Psoas muscle (tissue), 8 donors: ENCODE measurements at regions of chr9 and their contacts with region 1.

Region 1: GRCh38 chr9:133184962-133185361 is 21.2 kb upstream of the GBGT1 start:
- DNase-seq: no peak
- ATAC-seq: peak; percentile 53 to 80 (median 62)
- H3K4me3 ChIP-seq: no peak overlapping the region
- H3K27ac ChIP-seq: no peak overlapping the region
- H3K4me1 ChIP-seq: no peaks in the 10 kb centered on the region
- H3K27me3 ChIP-seq: peaks cover 0 to 43% (median 6%) of the 10 kb centered on the region in 3 donors
- CTCF ChIP-seq: peak; percentile 54

Region 2: GRCh38 chr9:132973713-132974112 is 211.2 kb before region 1 on chr9:
- intact Hi-C with region 1: no loop called
- DNase-seq: no peak
- ATAC-seq: peak in 1 of 4 donors; percentile 40
- H3K4me3 ChIP-seq: no peak overlapping the region
- H3K27ac ChIP-seq: no peak overlapping the region
- H3K4me1 ChIP-seq: no peaks in the 10 kb centered on the region
- H3K27me3 ChIP-seq: peaks cover 0 to 39% (median 0%) of the 10 kb centered on the region in 3 donors
- CTCF ChIP-seq: no peak

Region 3: GRCh38 chr9:133275105-133276000 is 90.4 kb after region 1 on chr9 and contains the start of gene ABO:
- intact Hi-C with region 1: loop called in 1 of 2 experiments (anchors 5 kb)
- DNase-seq: no peak
- ATAC-seq: peak in 2 of 4 donors; percentile 42 to 45
- H3K4me3 ChIP-seq: peak within 1 kb of the TSS; percentile 60
- H3K27ac ChIP-seq: peak within 1 kb of the TSS; percentile 43
- H3K4me1 ChIP-seq: no peaks in the 10 kb centered on the region
- H3K27me3 ChIP-seq: peaks cover 5 to 62% (median 11%) of the 10 kb centered on the region in 3 donors
- CTCF ChIP-seq: peak; percentile 10
- total RNA-seq, gene ABO: 0.37 to 0.86 (median 0.72) TPM

Region 4: DNA sequence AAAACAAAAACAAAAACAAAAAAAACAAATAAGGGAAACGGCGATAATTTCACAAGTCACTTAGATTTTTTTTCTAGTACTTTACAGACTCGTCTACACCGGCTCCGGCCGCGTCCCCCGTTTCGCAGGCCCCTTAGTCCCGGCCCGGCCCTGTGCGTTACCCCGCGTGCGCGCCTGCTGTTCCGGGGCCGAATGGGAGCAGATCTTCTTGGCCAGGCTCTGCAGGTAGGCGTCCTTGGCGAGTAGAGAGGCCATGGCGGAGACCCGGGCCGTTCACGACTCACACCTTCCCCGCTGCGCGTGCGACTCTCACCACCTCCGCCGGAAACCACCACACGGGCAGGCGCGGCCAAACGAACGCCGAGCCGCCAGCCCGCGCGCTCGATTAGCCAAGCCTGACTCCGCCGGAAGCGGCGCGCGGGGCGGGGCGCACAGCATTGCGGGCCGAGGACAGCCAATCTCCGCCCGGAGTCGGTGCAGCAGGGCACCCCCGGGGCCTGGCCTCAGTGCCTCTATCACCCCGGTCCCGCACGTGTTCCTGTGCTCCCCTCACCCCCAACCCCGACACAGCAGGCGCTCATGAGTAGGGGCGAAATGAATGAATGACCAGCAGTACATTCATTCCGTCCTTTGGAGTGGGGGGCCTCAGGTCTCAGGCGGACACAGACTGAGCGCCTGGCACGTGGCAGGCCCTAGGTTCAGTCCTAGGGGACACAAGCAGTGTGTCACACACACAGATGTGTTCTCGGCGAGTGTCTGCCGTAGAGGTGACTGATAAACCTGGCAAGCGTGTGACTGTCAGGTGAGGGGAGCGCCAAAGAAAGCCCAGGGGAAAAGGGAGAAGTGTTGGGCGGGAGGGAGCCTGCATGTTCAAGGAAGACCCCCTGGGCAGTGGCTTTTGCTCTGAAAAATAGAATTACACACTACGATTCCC is 151.2 kb after region 1 on chr9 and contains the start of gene SURF6:
- intact Hi-C with region 1: loop called (anchors 5 kb)
- DNase-seq: peak; percentile 95 to 96
- ATAC-seq: peak; percentile 96 to 97 (median 97)
- H3K4me3 ChIP-seq: peak within 1 kb of the TSS; percentile 87
- H3K27ac ChIP-seq: peak within 1 kb of the TSS; percentile 88
- H3K4me1 ChIP-seq: peaks cover 24% of the 10 kb centered on the region
- H3K27me3 ChIP-seq: no peaks in the 10 kb centered on the region
- CTCF ChIP-seq: no peak
- total RNA-seq, gene SURF6: 11.4 to 27.3 (median 16.0) TPM

Region 5: DNA sequence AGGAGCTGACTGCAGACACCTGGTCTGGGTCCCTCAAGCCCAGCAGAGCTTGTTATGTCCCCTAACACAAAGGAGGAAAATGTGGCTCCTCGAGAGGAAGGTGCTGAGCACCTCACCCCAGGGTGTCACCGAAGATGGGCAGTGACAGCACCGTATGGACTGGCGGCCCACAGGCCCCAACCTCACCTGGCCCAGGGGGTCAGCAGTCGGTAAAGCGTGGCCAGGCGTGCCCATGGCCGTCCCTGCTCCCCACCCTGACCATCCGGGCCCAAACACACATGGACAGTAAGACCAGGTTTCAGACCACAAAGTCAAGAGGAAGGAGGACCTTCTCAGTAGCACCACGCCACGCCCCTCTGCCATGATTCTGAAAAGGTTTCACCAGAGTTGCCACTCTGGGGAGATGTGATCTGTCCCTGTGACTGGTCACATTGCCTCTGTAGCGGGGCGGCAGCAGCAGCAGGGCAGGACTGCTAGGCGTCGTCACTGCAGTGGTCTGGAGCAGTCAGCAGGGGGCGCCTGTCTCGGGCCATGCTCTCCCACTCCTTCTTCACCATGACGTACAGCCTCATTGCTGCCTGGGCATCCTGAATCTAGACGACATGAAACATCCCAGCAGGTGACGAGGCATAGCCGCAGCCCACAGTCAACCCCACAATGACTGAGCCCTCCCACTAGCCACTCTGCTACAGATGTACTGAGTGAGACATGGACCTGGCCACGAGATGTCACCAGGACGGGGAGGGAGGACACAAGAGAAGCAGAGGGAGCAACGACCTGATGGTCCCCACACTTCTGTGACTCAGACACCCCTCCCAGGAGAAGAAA is 221.7 kb after region 1 on chr9:
- intact Hi-C with region 1: loop called in 1 of 2 experiments (anchors 5 kb)
- DNase-seq: peak; percentile 74 to 85
- ATAC-seq: peak; percentile 78 to 85 (median 82)
- H3K4me3 ChIP-seq: no peak overlapping the region
- H3K27ac ChIP-seq: peak overlapping the region; percentile 76
- H3K4me1 ChIP-seq: peaks cover 18% of the 10 kb centered on the region
- H3K27me3 ChIP-seq: no peaks in the 10 kb centered on the region
- CTCF ChIP-seq: peak; percentile 83

Region 6: GRCh38 chr9:133485361-133486260 is 300.6 kb after region 1 on chr9:
- intact Hi-C with region 1: loop called (anchors 1 to 5 kb)
- DNase-seq: peak in 1 of 2 donors; percentile 46
- ATAC-seq: peak in 3 of 4 donors; percentile 7 to 23 (median 20)
- H3K4me3 ChIP-seq: no peak overlapping the region
- H3K27ac ChIP-seq: no peak overlapping the region
- H3K4me1 ChIP-seq: no peaks in the 10 kb centered on the region
- H3K27me3 ChIP-seq: peaks cover 0 to 7% (median 0%) of the 10 kb centered on the region in 3 donors
- CTCF ChIP-seq: no peak